Activated CD4-positive, alpha-beta T cell treated with anti-CD3 and anti-CD28 coated beads, Interleukin-2, amount 10 ng/mL, durations not matched to agents 7 days and 5 days (primary cell): ENCODE measurements at regions of chr20 and their contacts with region 1.

Region 1: DNA sequence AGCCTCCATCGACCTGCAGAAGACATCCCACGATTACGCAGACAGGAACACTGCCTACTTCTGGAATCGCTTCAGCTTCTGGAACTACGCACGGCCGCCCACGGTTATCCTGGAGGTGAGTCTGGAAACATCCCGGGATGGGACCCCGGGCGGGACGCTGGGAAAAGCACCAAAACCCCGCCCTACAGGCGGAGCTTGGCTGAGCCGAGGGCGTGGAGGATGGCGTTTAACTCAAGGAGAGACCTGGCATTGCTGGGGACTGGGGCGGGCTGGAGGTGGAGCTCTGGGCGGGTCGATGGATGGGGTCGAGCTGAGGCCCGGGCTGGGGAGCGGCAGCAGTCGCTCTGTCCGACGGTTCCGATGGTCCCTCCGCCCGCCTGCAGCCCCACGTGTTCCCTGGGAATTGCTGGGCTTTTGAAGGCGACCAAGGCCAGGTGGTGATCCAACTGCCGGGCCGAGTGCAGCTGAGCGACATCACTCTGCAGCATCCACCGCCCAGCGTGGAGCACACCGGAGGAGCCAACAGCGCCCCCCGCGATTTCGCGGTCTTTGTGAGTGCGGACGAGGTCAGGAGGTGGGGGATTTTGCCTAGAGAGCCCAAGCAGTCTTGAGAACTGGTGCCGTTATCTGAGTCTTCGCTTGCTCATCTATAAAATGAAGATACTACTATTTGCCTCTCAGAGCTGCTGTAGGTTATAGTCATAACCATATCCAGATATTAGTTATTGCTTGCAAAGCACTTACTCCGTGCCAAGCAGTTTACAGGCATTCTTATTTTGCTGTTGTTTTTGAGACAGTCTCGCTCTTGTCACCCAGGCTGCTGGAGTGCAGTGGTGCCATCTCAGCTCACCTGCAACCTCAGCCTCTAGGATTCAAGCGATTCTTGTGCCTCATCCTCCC is 3.8 kb downstream of the SPAG4 start:
- DNase-seq: peak; percentile 76
- H3K4me3 Mint-ChIP-seq: peak overlapping the region; percentile 77
- H3K27ac Mint-ChIP-seq: peak overlapping the region; percentile 79
- H3K4me1 Mint-ChIP-seq: peaks cover 40% of the 10 kb centered on the region
- H3K27me3 Mint-ChIP-seq: no peaks in the 10 kb centered on the region

Region 2: DNA sequence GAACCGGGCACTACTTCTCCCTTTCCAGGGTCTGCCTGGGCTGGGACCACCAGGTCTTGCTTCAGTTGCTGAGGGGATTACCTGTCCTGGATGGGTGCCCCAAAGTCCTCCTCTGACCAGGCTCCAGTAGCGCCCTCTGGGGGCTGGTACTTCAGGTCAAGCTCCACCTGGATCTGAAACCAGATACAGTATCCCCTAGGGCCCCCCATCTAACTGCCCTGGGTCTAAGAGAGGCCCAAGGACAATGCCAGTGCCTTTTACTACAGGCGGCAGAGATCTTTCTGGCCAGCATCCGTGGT is 15.0 kb before region 1 on chr20:
- CTCF ChIA-PET with region 1: interaction called, 50 read pairs
- POLR2A ChIA-PET with region 1: no interaction called
- DNase-seq: no peak
- H3K4me3 Mint-ChIP-seq: no peak overlapping the region
- H3K27ac Mint-ChIP-seq: no peak overlapping the region
- H3K4me1 Mint-ChIP-seq: peaks cover 14% of the 10 kb centered on the region
- H3K27me3 Mint-ChIP-seq: peaks cover 25% of the 10 kb centered on the region

Region 3: DNA sequence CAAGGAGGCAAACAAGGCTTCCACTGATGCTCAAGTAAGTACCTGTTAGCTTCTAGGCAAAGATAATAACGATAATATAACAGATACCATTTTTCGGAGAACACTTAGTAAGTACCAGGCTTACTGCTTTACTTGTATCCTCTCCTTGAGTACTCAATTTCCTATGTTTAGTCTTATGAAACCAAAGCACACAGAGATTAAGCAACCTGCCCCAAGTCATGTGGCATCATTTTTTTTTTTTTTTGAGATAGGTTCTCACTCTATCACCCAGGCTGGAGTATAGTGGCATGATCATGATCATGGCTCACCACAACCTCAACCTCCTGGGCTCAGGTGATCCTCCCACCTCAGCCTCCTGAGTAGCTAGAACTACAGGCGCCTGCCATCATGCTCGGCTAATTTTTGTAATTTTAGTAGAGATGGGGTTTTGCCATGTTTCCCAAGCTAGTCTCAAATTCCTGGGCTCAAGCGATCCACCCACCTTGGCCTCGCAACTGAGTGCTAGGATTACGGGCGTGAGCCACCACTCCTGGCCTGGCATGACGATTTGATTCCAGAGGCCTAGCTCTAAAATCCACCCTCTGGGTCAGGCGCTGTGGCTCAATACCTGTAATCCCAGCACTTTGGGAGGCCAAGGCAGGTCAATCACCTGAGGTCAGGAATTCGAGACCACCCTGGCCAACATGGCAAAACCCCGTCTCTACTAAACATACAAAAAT is 10.1 kb after region 1 on chr20:
- CTCF ChIA-PET with region 1: interaction called, 28 read pairs
- POLR2A ChIA-PET with region 1: no interaction called
- DNase-seq: no peak
- H3K4me3 Mint-ChIP-seq: no peak overlapping the region
- H3K27ac Mint-ChIP-seq: no peak overlapping the region
- H3K4me1 Mint-ChIP-seq: no peaks in the 10 kb centered on the region
- H3K27me3 Mint-ChIP-seq: no peaks in the 10 kb centered on the region

Region 4: GRCh38 chr20:35664544-35665221 is 45.2 kb after region 1 on chr20 and contains the starts of genes CPNE1 and RBM12:
- CTCF ChIA-PET with region 1: interaction called, 10 read pairs
- POLR2A ChIA-PET with region 1: interaction called, 9 read pairs
- DNase-seq: peak; percentile 95
- H3K4me3 Mint-ChIP-seq: peak within 1 kb of the TSS; percentile 98
- H3K27ac Mint-ChIP-seq: peak within 1 kb of the TSS; percentile 99
- H3K4me1 Mint-ChIP-seq: peaks cover 42% of the 10 kb centered on the region
- H3K27me3 Mint-ChIP-seq: no peaks in the 10 kb centered on the region
- total RNA-seq, gene CPNE1: 252 to 256 TPM
- total RNA-seq, gene RBM12: 121 to 127 TPM

Region 5: DNA sequence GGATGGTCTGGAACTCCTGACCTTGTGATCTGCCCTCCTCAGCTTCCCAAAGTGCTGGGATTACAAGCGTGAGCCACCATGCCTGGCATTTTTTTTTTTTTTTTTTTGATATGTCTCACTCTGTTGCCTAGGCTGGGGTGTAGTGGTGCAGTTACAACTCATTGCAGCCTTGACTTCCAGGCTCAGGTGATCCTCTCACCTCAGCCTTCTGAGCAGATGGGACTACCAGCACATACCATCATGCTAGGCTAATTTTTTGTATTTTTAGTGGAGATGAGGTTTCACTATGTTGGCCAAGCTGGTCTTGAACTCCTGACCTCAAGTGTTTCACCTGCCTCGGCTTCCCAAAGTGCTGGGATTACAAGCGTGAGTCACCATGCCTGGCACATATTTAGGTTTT is 186.6 kb after region 1 on chr20:
- CTCF ChIA-PET with region 1: no interaction called
- POLR2A ChIA-PET with region 1: no interaction called
- DNase-seq: no peak
- H3K4me3 Mint-ChIP-seq: no peak overlapping the region
- H3K27ac Mint-ChIP-seq: no peak overlapping the region
- H3K4me1 Mint-ChIP-seq: peaks cover 10% of the 10 kb centered on the region
- H3K27me3 Mint-ChIP-seq: no peaks in the 10 kb centered on the region

Region 6: GRCh38 chr20:36035745-36036144 is 416.3 kb after region 1 on chr20:
- CTCF ChIA-PET with region 1: no interaction called
- POLR2A ChIA-PET with region 1: no interaction called
- DNase-seq: no peak
- H3K4me3 Mint-ChIP-seq: no peak overlapping the region
- H3K27ac Mint-ChIP-seq: no peak overlapping the region
- H3K4me1 Mint-ChIP-seq: no peaks in the 10 kb centered on the region
- H3K27me3 Mint-ChIP-seq: peaks cover 2% of the 10 kb centered on the region